ENCODE measurements at regions of chr16 and their contacts with region 1.

Region 1: DNA sequence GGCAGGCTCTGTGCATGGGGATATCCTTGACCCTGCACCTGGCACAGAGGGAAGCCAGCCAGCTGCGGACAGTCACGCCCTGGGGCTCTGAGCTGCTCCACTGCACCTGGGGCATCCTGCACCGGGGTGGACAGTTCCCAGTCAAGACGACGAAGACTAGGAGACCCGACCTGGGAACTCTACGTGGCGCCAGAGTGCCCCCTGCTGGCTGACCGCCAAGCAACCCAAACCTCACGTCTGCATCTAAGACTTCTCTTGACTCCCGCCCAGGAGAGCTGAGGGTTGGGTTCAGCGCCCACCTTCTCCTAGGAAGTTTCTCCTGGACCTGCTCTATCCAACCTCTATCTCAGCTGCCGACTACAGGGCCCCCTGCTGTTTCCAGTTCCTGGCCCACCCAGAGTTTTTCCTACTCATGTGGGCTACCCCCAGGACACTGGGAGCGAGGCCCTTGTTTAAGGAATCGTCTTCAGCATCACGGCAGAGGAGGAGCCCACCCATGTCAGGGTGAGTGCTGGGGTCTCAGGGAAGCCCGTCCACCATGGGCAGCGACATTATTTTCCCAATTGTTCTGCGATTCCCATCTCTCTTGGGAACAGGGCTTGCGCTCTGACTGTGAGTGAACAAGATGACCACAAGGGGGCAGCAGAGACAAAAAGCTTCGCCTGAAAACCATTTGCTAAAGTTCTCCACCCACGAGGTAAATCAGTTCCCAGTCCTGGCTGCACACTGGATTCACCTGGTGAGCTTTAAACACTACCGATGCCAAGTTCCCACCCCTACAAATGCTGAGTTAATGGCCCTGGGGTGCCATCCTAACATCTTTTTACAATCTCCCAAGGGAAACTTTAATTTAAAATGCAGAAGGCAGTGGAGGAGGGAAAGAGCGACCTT is 29.3 kb downstream of the TLE7 start:
- DNase-seq: peak; percentile 38 to 82 (median 60)
- ATAC-seq: peak; percentile 69
- H3K4me3 ChIP-seq: no peak overlapping the region
- H3K4me3 Mint-ChIP-seq: no peak overlapping the region
- H3K27ac ChIP-seq: no peak overlapping the region
- H3K27ac Mint-ChIP-seq: no peak overlapping the region
- H3K4me1 ChIP-seq: peaks cover 8% of the 10 kb centered on the region
- H3K4me1 Mint-ChIP-seq: peaks cover 5% of the 10 kb centered on the region
- H3K27me3 ChIP-seq: peaks cover 5 to 28% of the 10 kb centered on the region in 2 experiments
- H3K27me3 Mint-ChIP-seq: peaks cover 59% of the 10 kb centered on the region
- CTCF ChIP-seq: peak; percentile 94

Region 2: DNA sequence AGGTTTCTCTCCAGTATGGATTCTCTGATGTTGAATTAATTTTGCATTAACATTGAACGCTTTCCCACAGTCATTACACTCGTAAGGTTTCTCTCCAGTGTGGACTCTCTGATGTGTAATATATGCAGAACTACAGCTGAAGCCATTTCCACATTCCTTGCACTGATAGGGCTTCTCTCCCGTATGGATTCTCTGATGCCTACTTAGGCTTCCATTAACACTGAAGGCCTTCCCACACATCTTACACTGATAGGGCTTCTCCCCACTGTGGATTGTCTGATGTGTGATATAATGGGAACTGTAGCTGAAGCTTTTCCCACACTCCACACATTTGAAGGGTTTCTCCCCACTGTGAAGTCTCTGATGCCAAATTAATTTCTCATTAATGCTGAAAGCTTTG is 36.5 kb after region 1 on chr16:
- CTCF ChIA-PET with region 1: no interaction called
- POLR2A ChIA-PET with region 1: no interaction called
- intact Hi-C with region 1: no loop called
- DNase-seq: no peak
- ATAC-seq: no peak
- H3K4me3 ChIP-seq: no peak overlapping the region
- H3K4me3 Mint-ChIP-seq: no peak overlapping the region
- H3K27ac ChIP-seq: no peak overlapping the region
- H3K27ac Mint-ChIP-seq: no peak overlapping the region
- H3K4me1 ChIP-seq: no peaks in the 10 kb centered on the region
- H3K4me1 Mint-ChIP-seq: no peaks in the 10 kb centered on the region
- H3K27me3 ChIP-seq: no peaks in the 10 kb centered on the region
- H3K27me3 Mint-ChIP-seq: no peaks in the 10 kb centered on the region
- CTCF ChIP-seq: no peak

Region 3: DNA sequence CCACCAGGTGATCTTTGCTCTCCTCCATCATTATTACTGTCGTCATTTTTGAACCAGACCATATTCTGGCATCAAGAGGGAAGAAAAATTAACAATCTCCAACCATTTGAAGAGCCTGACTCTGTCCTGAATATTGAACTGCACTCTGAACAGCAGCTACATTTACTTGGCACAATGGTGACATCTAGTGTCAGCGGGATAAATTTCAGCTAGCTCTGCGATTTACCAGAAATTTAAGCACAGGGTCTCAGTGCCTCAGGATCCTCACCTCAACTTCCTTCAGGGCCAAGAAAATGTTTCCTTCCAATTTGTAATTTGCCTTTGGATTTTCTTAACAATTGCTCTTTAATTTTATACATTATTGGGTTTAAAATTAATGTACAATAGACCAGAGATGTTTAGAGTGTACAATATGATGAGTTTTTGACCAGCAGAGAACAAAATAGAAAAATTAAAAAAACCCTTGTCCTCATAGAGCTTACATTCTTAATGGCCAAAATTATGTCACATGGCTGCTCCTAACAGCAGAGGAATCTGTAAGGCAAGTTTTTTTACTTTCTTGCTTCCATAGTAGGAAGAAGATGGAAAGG is 87.4 kb after region 1 on chr16:
- CTCF ChIA-PET with region 1: interaction called, 42 read pairs
- POLR2A ChIA-PET with region 1: interaction called, 3 read pairs
- intact Hi-C with region 1: loop called (anchors 1 kb)
- DNase-seq: peak in 13 of 14 experiments; percentile 10 to 79 (median 33)
- ATAC-seq: peak; percentile 78
- H3K4me3 ChIP-seq: no peak overlapping the region
- H3K4me3 Mint-ChIP-seq: no peak overlapping the region
- H3K27ac ChIP-seq: no peak overlapping the region
- H3K27ac Mint-ChIP-seq: no peak overlapping the region
- H3K4me1 ChIP-seq: no peaks in the 10 kb centered on the region
- H3K4me1 Mint-ChIP-seq: no peaks in the 10 kb centered on the region
- H3K27me3 ChIP-seq: no peaks in the 10 kb centered on the region
- H3K27me3 Mint-ChIP-seq: peaks cover 19% of the 10 kb centered on the region
- CTCF ChIP-seq: peak; percentile 79

Region 4: GRCh38 chr16:71537643-71538042 is 125.1 kb after region 1 on chr16:
- CTCF ChIA-PET with region 1: interaction called, 3 read pairs
- POLR2A ChIA-PET with region 1: no interaction called
- intact Hi-C with region 1: loop called in 1 of 2 experiments (anchors 1 kb)
- DNase-seq: peak in 11 of 14 experiments; percentile 2 to 53 (median 15)
- ATAC-seq: peak; percentile 54
- H3K4me3 ChIP-seq: no peak overlapping the region
- H3K4me3 Mint-ChIP-seq: no peak overlapping the region
- H3K27ac ChIP-seq: no peak overlapping the region
- H3K27ac Mint-ChIP-seq: no peak overlapping the region
- H3K4me1 ChIP-seq: peaks cover 3% of the 10 kb centered on the region
- H3K4me1 Mint-ChIP-seq: no peaks in the 10 kb centered on the region
- H3K27me3 ChIP-seq: peaks cover 0 to 3% of the 10 kb centered on the region in 2 experiments
- H3K27me3 Mint-ChIP-seq: peaks cover 11% of the 10 kb centered on the region
- CTCF ChIP-seq: peak; percentile 42

Region 5: GRCh38 chr16:71610936-71611871 is 198.7 kb after region 1 on chr16:
- CTCF ChIA-PET with region 1: interaction called, 11 read pairs
- POLR2A ChIA-PET with region 1: no interaction called
- intact Hi-C with region 1: loop called (anchors 1 to 2 kb)
- DNase-seq: peak; percentile 58 to 86 (median 72)
- ATAC-seq: peak; percentile 93
- H3K4me3 ChIP-seq: no peak overlapping the region
- H3K4me3 Mint-ChIP-seq: no peak overlapping the region
- H3K27ac ChIP-seq: no peak overlapping the region
- H3K27ac Mint-ChIP-seq: no peak overlapping the region
- H3K4me1 ChIP-seq: peaks cover 6% of the 10 kb centered on the region
- H3K4me1 Mint-ChIP-seq: no peaks in the 10 kb centered on the region
- H3K27me3 ChIP-seq: peaks cover 4 to 5% of the 10 kb centered on the region in 2 experiments
- H3K27me3 Mint-ChIP-seq: peaks cover 34% of the 10 kb centered on the region
- CTCF ChIP-seq: peak; percentile 92

Measured in CD4-positive, alpha-beta T cell (primary cell).